ENCODE measurements at regions of chr1 and their contacts with region 1.

Region 1: GRCh38 chr1:63705078-63705477 is 68.7 kb upstream of the ROR1 start:
- DNase-seq: no peak
- ATAC-seq: peak; percentile 21; the same call in 1 of the 3 replicates
- H3K4me3 ChIP-seq: no peak overlapping the region
- H3K27ac ChIP-seq: no peak overlapping the region
- H3K4me1 ChIP-seq: no peaks in the 10 kb centered on the region
- H3K27me3 ChIP-seq: no peaks in the 10 kb centered on the region; a peak in 2 of 4 replicates
- CTCF ChIP-seq: no peak
- EP300 ChIP-seq: no peak
- POLR2A ChIP-seq: no peak
- RAD21 ChIP-seq: no peak

Region 2: GRCh38 chr1:62917805-62918204 is 787.3 kb before region 1 on chr1:
- CTCF ChIA-PET with region 1: no interaction called
- POLR2A ChIA-PET with region 1: no interaction called
- RAD21 ChIA-PET with region 1: no interaction called
- SMC1A ChIA-PET with region 1: no interaction called
- in situ Hi-C with region 1: no loop called
- intact Hi-C with region 1: loop called (anchors 5 kb)
- DNase-seq: no peak
- ATAC-seq: no peak
- H3K4me3 ChIP-seq: no peak overlapping the region
- H3K27ac ChIP-seq: no peak overlapping the region
- H3K4me1 ChIP-seq: no peaks in the 10 kb centered on the region
- H3K27me3 ChIP-seq: peaks cover 0 to 2% of the 10 kb centered on the region in 2 experiments; a peak in 1 of 4 replicates
- CTCF ChIP-seq: no peak
- EP300 ChIP-seq: no peak
- POLR2A ChIP-seq: no peak
- RAD21 ChIP-seq: no peak

Region 3: DNA sequence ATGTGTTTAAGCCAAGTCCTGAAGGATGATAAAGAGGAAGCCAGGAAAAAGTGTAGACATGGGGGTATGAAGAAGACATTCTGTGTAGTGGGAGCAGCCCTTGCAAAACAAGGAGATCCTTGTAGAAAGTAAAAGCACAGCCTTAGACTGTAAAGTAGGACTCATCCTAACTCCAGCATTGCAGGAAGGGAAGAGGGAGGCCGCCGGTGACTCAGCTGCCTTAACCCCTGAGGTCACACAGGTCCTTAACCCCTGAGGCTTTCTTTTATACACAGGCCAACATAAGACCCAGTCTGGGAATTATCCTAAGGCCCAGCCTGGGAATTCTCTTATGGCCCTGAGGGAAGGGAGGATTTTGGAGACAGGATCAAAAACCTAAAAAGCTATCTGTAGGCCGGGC is 93.8 kb before region 1 on chr1:
- CTCF ChIA-PET with region 1: no interaction called
- POLR2A ChIA-PET with region 1: no interaction called
- RAD21 ChIA-PET with region 1: no interaction called
- SMC1A ChIA-PET with region 1: no interaction called
- in situ Hi-C with region 1: no loop called
- intact Hi-C with region 1: no loop called
- DNase-seq: no peak
- ATAC-seq: no peak
- H3K4me3 ChIP-seq: no peak overlapping the region
- H3K27ac ChIP-seq: no peak overlapping the region
- H3K4me1 ChIP-seq: peaks cover 8% of the 10 kb centered on the region
- H3K27me3 ChIP-seq: no peaks in the 10 kb centered on the region
- CTCF ChIP-seq: no peak
- EP300 ChIP-seq: no peak
- POLR2A ChIP-seq: no peak
- RAD21 ChIP-seq: no peak

Region 4: GRCh38 chr1:63643926-63644325 is 61.2 kb before region 1 on chr1:
- CTCF ChIA-PET with region 1: no interaction called
- POLR2A ChIA-PET with region 1: no interaction called
- RAD21 ChIA-PET with region 1: no interaction called
- SMC1A ChIA-PET with region 1: no interaction called
- in situ Hi-C with region 1: no loop called
- intact Hi-C with region 1: no loop called
- DNase-seq: no peak
- ATAC-seq: no peak
- H3K4me3 ChIP-seq: no peak overlapping the region
- H3K27ac ChIP-seq: no peak overlapping the region
- H3K4me1 ChIP-seq: no peaks in the 10 kb centered on the region
- H3K27me3 ChIP-seq: no peaks in the 10 kb centered on the region
- CTCF ChIP-seq: no peak
- EP300 ChIP-seq: no peak
- POLR2A ChIP-seq: no peak
- RAD21 ChIP-seq: no peak

Region 5: DNA sequence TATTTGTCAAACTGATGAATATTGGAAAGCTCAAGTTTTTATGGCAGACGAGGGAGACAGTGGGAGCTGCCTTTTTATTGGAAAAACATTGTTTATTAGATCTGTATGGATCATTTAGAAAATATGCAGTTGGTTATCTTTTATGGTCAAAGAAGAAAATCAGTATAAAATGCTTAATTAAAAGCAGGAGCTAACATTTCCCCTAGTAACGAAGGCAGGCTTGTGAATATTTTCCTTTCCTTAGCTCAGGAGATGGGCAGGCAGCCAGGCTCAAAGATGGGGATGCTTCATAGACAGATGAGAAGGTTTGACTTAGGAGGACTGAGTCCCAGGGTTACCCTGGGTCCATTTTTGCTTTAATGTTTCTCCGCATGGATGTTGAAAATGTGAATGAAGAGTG is 94.7 kb after region 1 on chr1:
- CTCF ChIA-PET with region 1: no interaction called
- POLR2A ChIA-PET with region 1: no interaction called
- RAD21 ChIA-PET with region 1: no interaction called
- SMC1A ChIA-PET with region 1: no interaction called
- in situ Hi-C with region 1: no loop called
- intact Hi-C with region 1: no loop called
- DNase-seq: no peak
- ATAC-seq: no peak
- H3K4me3 ChIP-seq: no peak overlapping the region
- H3K27ac ChIP-seq: no peak overlapping the region
- H3K4me1 ChIP-seq: no peaks in the 10 kb centered on the region
- H3K27me3 ChIP-seq: peaks cover 0 to 3% of the 10 kb centered on the region in 2 experiments; a peak in 2 of 4 replicates
- CTCF ChIP-seq: no peak
- EP300 ChIP-seq: no peak
- POLR2A ChIP-seq: no peak
- RAD21 ChIP-seq: no peak

Measured in GM12878 (cell line).